Activated T-helper 2 cell treated with anti-CD3 and anti-CD28 coated beads, Interferon-gamma antibody, Interleukin-2, Interleukin-4, amounts not matched to agents 10 μg/mL and 5 μg/mL and 100 μg/mL, durations not matched to agents 14 hours and 24 hours and 36 hours (primary cell): ENCODE measurements at regions of chr4 and their contacts with region 1.

Region 1: DNA sequence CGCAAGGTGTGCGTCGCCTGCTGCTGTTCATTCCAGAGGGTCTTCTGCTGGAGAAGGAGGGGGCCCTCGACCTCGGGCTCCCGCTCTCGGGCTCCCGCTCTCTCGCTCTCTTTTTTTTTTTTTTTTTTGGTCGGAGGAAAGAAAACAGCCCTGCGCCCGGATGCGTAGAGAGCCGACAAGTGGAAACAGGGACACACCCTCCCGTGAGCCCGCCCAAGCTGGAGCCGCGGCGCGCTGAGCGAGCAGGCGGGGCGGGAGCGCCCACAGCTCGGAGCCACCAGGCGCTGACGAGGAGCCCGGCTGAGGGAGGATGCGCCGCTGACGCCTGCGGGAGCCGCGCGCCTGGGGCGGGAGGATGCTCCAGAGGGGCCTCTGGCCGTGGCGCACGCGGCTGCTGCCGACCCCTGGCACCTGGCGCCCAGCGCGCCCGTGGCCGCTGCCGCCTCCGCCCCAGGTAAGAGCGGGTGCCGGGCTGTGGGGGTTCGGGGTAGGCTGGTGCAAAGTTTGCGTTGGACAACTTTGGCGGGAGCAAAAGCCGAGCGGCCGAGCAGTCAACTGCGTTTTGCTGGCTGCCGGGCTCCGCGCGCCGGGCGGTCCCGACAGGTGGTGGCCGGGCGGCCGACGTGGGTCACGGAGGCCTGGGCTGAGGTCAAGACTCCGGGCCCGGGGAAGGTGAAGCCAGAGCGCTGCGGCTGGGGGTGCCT is at the start of gene MCUB:
- DNase-seq: peak; percentile 93
- H3K4me3 Mint-ChIP-seq: peak within 1 kb of the TSS; percentile 84
- H3K27ac Mint-ChIP-seq: peak within 1 kb of the TSS; percentile 93
- H3K4me1 Mint-ChIP-seq: peaks cover 33% of the 10 kb centered on the region
- H3K27me3 Mint-ChIP-seq: no peaks in the 10 kb centered on the region
- total RNA-seq, gene MCUB: 30.1 and 37.1 TPM in 2 replicates

Region 2: GRCh38 chr4:109433205-109434006 is 126.7 kb before region 1 on chr4 and contains the start of gene SEC24B:
- intact Hi-C with region 1: loop called (anchors 2 kb)
- DNase-seq: peak; percentile 86
- H3K4me3 Mint-ChIP-seq: peak within 1 kb of the TSS; percentile 84
- H3K27ac Mint-ChIP-seq: peak within 1 kb of the TSS; percentile 71
- H3K4me1 Mint-ChIP-seq: peaks cover 51% of the 10 kb centered on the region
- H3K27me3 Mint-ChIP-seq: no peaks in the 10 kb centered on the region
- total RNA-seq, gene SEC24B: 32.0 and 32.3 TPM in 2 replicates

Region 3: GRCh38 chr4:109444182-109444844 is 115.8 kb before region 1 on chr4:
- intact Hi-C with region 1: no loop called
- DNase-seq: no peak
- H3K4me3 Mint-ChIP-seq: no peak overlapping the region
- H3K27ac Mint-ChIP-seq: no peak overlapping the region
- H3K4me1 Mint-ChIP-seq: peaks cover 45% of the 10 kb centered on the region
- H3K27me3 Mint-ChIP-seq: no peaks in the 10 kb centered on the region

Region 4: GRCh38 chr4:109576462-109576861 is 16.3 kb after region 1 on chr4:
- intact Hi-C with region 1: loop called (anchors 1 kb)
- DNase-seq: no peak
- H3K4me3 Mint-ChIP-seq: no peak overlapping the region
- H3K27ac Mint-ChIP-seq: no peak overlapping the region
- H3K4me1 Mint-ChIP-seq: peaks cover 35% of the 10 kb centered on the region
- H3K27me3 Mint-ChIP-seq: peaks cover 6% of the 10 kb centered on the region

Region 5: DNA sequence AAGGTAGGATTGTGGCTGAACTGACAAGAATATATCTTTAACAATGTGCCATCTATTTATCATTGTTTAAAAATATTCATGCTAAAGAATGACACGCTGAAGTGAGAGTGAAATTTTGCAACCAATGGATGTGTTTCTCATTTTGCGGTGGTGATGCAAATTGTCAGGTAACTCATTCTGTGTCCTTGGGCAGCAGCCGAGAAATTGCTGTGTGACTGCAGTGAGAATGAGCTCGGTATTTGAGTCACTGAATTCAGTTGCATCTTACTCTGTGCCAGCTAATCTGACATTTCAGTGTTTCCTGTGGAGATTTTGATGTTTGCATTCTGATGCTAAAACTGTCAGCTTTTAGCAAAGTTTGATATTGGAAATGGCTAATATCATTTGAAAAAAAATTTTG is 28.0 kb after region 1 on chr4:
- intact Hi-C with region 1: loop called (anchors 1 kb)
- DNase-seq: peak; percentile 25
- H3K4me3 Mint-ChIP-seq: peak overlapping the region; percentile 18
- H3K27ac Mint-ChIP-seq: peak overlapping the region; percentile 34
- H3K4me1 Mint-ChIP-seq: peaks cover 44% of the 10 kb centered on the region
- H3K27me3 Mint-ChIP-seq: no peaks in the 10 kb centered on the region

Region 6: GRCh38 chr4:109648266-109648996 is 88.3 kb after region 1 on chr4:
- intact Hi-C with region 1: loop called (anchors 2 kb)
- DNase-seq: no peak
- H3K4me3 Mint-ChIP-seq: peak overlapping the region; percentile 44
- H3K27ac Mint-ChIP-seq: peak overlapping the region; percentile 82
- H3K4me1 Mint-ChIP-seq: peaks cover 27% of the 10 kb centered on the region
- H3K27me3 Mint-ChIP-seq: no peaks in the 10 kb centered on the region

Region 7: DNA sequence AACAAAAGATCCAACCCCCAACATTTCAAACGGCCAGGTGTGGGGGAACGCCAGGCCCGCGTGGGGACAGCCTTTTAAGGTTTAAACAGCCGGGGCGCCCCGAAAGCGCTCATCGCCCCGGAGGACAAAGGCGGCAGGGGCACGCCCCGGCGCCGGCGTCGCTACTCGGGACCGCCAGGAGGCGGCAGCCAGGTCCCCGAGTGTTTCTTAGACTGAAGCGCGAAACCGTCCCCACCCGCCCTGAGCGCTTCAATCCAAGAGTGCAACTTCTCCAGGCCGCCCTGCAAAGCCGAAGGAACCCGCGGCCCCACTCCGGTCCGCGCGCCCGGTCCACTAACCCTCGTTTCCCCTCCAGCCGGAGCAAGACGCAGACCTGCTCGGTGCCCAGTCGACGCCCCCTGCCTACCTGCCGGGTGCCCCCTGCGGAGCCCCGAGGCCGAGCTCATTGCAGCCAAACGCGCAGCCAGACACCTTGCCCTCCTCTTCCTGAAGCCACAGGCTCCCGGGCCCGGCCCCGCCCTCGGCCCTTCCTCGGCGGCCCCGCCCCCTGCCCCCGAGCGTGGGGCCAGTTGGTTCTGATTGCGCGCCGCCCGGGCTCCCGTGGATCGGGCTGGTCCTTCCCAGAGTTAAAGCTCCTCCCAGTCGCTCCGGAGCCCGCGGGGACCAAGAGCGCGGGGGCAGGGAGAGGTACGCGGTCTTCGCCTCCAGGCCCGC is 143.0 kb after region 1 on chr4 and contains the start of gene CASP6:
- intact Hi-C with region 1: loop called (anchors 2 kb)
- DNase-seq: peak; percentile 73
- H3K4me3 Mint-ChIP-seq: peak within 1 kb of the TSS; percentile 85
- H3K27ac Mint-ChIP-seq: peak within 1 kb of the TSS; percentile 85
- H3K4me1 Mint-ChIP-seq: peaks cover 35% of the 10 kb centered on the region
- H3K27me3 Mint-ChIP-seq: no peaks in the 10 kb centered on the region
- total RNA-seq, gene CASP6: 26.7 and 31.8 TPM in 2 replicates

Region 8: GRCh38 chr4:109729718-109730618 is 169.8 kb after region 1 on chr4 and contains the start of gene PLA2G12A:
- intact Hi-C with region 1: loop called (anchors 2 kb)
- DNase-seq: peak; percentile 68
- H3K4me3 Mint-ChIP-seq: peak within 1 kb of the TSS; percentile 82
- H3K27ac Mint-ChIP-seq: no peak within 1 kb of the TSS
- H3K4me1 Mint-ChIP-seq: peaks cover 14% of the 10 kb centered on the region
- H3K27me3 Mint-ChIP-seq: no peaks in the 10 kb centered on the region
- total RNA-seq, gene PLA2G12A: 7.9 and 10.4 TPM in 2 replicates

Region 9: DNA sequence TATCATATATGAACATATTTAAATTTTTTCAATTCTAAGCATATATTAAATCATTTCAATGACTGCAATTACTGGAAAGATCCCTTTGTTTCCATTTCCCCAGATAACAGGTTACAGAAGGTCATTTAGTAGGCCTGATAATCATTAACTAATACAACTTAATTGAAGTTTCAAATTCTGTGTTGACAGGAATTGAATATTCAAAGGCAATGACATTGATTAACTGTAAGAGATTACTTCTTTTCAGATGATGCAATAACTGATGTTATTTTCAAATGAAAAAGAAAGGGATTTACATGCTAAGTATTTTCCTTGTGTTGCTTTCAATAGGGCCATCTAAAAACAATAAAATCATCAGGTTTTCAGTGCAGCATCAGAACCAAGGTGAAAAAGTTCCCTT is 834.7 kb after region 1 on chr4:
- intact Hi-C with region 1: no loop called
- DNase-seq: no peak
- H3K4me3 Mint-ChIP-seq: no peak overlapping the region
- H3K27ac Mint-ChIP-seq: no peak overlapping the region
- H3K4me1 Mint-ChIP-seq: no peaks in the 10 kb centered on the region
- H3K27me3 Mint-ChIP-seq: peaks cover 3% of the 10 kb centered on the region